IMR-90 (cell line): ENCODE measurements at regions of chr10 and their contacts with region 1.

Region 1: GRCh38 chr10:50552771-50553535 is 70.8 kb downstream of the SGMS1 start:
- DNase-seq: peak; percentile 36
- ATAC-seq: peak; percentile 24
- H3K4me3 ChIP-seq: no peak overlapping the region
- H3K27ac ChIP-seq: peak overlapping the region; percentile 95; the same call in 1 of the 2 replicates
- H3K4me1 ChIP-seq: peaks cover 23% of the 10 kb centered on the region
- H3K27me3 ChIP-seq: no peaks in the 10 kb centered on the region
- CTCF ChIP-seq: peak; percentile 39
- POLR2A ChIP-seq: no peak
- RAD21 ChIP-seq: peak; percentile 51

Region 2: DNA sequence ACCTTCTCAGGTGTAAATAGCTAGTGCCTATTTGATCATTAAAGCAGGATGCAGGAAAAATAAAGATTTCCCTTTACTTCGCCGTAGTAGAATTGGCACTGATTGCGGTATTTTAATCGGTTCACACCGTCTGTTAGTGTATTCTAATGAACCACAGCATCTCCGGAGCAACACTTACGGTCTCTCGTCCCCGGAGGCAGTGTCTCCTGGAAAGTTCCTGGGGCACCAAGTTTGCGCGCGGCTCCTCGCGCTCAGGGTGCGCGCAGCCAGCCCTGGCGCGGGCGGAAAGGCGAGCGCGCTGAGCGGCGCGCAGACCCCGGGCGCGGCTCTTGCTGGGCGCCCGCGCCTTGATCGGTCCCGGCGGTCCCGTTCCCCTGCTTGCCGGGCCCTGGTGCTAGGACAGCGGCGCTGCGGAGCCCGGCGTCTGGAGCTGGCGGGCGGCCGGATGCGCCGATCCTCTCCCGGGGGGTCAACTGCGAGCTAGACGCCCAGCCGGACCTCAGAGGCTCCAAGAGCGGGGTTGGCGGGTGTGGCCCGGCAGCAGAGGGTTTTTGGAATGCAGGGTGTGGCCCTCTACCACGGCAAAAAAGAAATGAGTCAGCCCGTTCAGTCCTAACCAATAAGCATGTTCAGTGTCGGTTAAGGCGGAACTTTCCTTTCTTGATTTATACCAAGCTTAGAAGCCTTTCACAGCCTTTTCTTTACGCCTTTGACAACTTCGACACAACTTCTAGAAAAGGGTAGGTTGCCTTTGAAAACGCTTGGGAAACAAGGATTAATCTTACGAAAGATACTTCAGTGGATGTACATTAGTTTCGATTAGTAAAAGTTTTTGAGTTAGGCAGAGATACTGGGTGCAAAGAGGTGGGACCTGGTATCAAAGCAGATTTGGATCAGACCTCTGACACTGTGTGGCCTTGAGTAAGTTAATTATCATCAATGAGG is 134.8 kb before region 1 on chr10:
- CTCF ChIA-PET with region 1: interaction called, 5 read pairs
- POLR2A ChIA-PET with region 1: interaction called, 5 read pairs
- dilution Hi-C with region 1: no loop called
- in situ Hi-C with region 1: no loop called
- intact Hi-C with region 1: loop called (anchors 2 kb)
- DNase-seq: peak; percentile 80
- ATAC-seq: peak; percentile 93
- H3K4me3 ChIP-seq: peak overlapping the region; percentile 47
- H3K27ac ChIP-seq: peak overlapping the region; percentile 24
- H3K4me1 ChIP-seq: peaks cover 10% of the 10 kb centered on the region; the same call in 1 of the 2 replicates
- H3K27me3 ChIP-seq: no peaks in the 10 kb centered on the region
- CTCF ChIP-seq: no peak; the same call in 1 of the 2 replicates
- POLR2A ChIP-seq: 0 out of 2 replicates have a peak, but pooled peaks have one; percentile 46
- RAD21 ChIP-seq: no peak

Region 3: DNA sequence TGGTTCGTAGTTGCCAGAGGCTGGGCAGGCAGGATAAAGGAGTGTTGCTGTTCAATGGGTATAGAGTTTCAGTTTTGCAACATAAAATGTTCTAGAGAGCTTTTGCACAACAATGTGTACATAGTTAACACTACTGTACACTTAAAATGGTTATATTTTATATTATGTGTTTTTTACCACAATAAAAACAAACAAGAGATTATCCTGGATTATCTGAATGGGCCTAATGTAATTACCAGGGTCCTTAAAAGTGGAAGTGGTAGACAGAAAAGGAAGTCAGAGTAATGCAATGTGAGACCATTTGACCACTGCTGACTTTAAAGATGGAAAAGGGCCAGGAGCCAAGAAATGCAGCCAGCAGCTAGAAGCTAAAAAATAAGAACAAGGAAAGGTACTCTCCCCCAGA is 88.9 kb before region 1 on chr10:
- CTCF ChIA-PET with region 1: no interaction called
- POLR2A ChIA-PET with region 1: no interaction called
- dilution Hi-C with region 1: no loop called
- in situ Hi-C with region 1: no loop called
- intact Hi-C with region 1: loop called (anchors 5 kb)
- DNase-seq: peak; percentile 41
- ATAC-seq: peak; percentile 32
- H3K4me3 ChIP-seq: no peak overlapping the region
- H3K27ac ChIP-seq: no peak overlapping the region
- H3K4me1 ChIP-seq: peaks cover 3% of the 10 kb centered on the region
- H3K27me3 ChIP-seq: no peaks in the 10 kb centered on the region
- CTCF ChIP-seq: no peak
- POLR2A ChIP-seq: no peak
- RAD21 ChIP-seq: no peak

Region 4: DNA sequence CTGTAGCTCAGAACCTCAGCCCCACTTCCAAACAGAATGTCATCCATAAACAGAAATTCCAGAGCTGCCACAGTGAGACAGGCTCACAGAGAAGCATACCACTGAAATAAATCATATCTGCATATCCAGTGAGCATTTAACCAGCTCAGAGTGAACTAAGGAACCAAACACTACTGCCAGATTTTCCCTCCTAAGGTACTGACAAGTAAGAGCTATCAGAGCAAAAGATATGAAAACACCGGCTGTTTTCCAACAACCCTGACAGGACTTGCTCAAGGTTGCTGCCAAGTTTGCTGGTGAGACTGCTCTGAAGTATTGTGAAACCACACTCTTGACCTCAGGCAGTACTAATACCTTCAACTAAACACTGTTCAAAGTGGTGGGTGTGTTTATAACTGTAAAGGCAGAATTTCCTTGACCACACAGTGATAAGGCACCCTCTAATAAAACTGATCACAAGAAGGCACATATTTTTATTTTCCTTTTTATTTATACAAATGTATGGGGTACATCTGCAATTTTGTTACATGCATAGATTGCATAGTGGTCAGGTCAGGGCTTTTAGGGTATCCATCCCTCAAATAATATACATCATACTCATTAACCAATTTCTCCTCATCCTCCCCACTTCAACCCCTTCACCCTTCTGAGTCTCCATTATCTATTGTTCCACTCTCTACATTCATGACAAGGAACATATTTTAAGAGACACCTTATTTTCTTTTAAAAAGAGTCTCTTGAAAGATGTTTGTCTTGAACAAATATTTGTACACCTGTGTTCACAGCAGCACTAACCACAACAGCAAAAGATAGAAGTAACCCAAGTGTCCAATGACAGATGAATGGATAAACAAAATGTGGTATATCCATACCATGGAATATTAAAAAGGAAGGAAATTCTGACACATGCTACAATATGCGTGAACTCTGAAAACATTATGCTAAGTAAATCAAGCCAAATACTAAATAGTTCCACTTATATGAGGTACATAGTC is 52.6 kb after region 1 on chr10:
- CTCF ChIA-PET with region 1: no interaction called
- POLR2A ChIA-PET with region 1: no interaction called
- dilution Hi-C with region 1: no loop called
- in situ Hi-C with region 1: no loop called
- intact Hi-C with region 1: loop called (anchors 5 kb)
- DNase-seq: peak; percentile 98
- ATAC-seq: peak; percentile 90
- H3K4me3 ChIP-seq: no peak overlapping the region
- H3K27ac ChIP-seq: peak overlapping the region; percentile 76; the same call in 1 of the 2 replicates
- H3K4me1 ChIP-seq: peaks cover 13% of the 10 kb centered on the region
- H3K27me3 ChIP-seq: no peaks in the 10 kb centered on the region
- CTCF ChIP-seq: no peak
- POLR2A ChIP-seq: no peak
- RAD21 ChIP-seq: no peak